Ovary (tissue), 10 donors: ENCODE measurements at regions of chr10 and their contacts with region 1.

Region 1: GRCh38 chr10:76244061-76244686 is 812.8 kb downstream of the LRMDA start:
- DNase-seq: peak in 4 of 5 donors; percentile 42 to 60 (median 51)
- H3K4me3 ChIP-seq: no peak overlapping the region
- H3K27ac ChIP-seq: no peak overlapping the region
- H3K4me1 ChIP-seq: peaks cover 24% of the 10 kb centered on the region
- H3K27me3 ChIP-seq: no peaks in the 10 kb centered on the region
- CTCF ChIP-seq: no peak
- EP300 ChIP-seq: no peak
- POLR2A ChIP-seq: no peak

Region 2: DNA sequence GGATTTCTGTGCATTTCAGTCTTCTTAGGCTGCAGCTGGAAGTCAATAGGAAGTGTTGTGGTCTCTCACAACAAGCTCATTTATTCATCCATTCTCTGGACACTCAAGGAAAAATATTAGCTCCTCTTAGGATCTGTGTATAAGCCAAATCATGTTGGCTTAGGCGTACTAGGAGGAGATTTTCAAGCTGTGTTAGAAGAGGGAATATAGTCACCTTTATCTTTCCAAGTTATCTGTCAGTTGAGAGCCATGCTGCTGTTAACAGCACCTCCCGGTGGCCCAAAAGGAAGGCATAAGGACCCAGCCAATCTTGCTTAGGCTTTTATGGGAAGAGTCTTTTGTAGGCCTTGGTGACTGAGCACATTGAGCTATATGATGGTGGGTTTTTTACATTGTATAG is 592.8 kb before region 1 on chr10:
- intact Hi-C with region 1: loop called in 1 of 4 experiments (anchors 10 kb)
- DNase-seq: no peak
- H3K4me3 ChIP-seq: no peak overlapping the region
- H3K27ac ChIP-seq: no peak overlapping the region
- H3K4me1 ChIP-seq: peaks cover 14% of the 10 kb centered on the region
- H3K27me3 ChIP-seq: no peaks in the 10 kb centered on the region
- CTCF ChIP-seq: no peak
- EP300 ChIP-seq: no peak
- POLR2A ChIP-seq: no peak

Region 3: DNA sequence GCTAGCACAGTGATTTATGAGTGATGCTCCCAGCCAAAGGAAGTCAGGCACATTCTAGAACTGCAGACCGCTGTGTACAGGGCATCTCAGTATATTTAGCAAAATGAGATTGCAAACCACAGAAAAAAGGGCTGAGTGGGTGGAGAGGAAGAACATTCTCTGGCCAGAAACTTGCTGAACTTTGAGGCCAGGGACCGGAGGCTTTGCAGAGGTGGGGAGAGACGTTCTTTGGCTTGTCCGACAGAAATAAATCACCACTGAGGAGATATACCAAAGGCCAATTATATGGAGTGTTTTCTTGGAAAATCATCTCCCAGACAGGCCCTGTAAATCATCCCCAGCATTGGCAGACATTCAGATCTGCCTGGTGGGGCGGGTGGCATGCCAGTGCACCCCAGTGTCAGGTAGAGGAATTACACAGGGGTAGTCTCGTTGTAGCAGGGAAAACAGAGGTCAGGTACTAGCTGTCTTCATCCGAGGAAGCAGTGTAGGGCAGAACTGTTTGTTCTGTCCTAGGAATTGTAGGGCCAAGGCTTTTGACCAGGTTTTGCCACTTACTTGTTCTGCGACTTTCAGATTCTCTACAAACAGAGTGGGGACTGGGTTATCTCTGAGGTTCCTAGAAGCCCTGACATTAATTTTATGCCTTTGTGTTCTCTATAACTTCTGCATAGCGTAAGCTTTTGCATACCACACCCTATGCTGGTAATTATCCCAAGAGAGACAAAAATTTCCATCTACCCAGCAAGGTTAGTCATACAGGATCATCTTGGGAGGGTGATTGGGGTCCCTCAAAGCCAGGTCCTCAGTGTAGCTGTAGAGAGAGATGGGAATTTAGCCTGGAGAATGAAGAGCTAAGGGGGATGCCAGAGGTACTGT is 157.2 kb before region 1 on chr10:
- intact Hi-C with region 1: loop called in 1 of 4 experiments (anchors 10 kb)
- DNase-seq: peak; percentile 76 to 84 (median 83)
- H3K4me3 ChIP-seq: no peak overlapping the region
- H3K27ac ChIP-seq: peak overlapping the region; percentile 25 to 28
- H3K4me1 ChIP-seq: peaks cover 16% of the 10 kb centered on the region
- H3K27me3 ChIP-seq: no peaks in the 10 kb centered on the region
- CTCF ChIP-seq: peak; percentile 49 to 65 (median 59)
- EP300 ChIP-seq: no peak
- POLR2A ChIP-seq: no peak